ENCODE measurements at regions of chr14 and their contacts with region 1.

Region 1: DNA sequence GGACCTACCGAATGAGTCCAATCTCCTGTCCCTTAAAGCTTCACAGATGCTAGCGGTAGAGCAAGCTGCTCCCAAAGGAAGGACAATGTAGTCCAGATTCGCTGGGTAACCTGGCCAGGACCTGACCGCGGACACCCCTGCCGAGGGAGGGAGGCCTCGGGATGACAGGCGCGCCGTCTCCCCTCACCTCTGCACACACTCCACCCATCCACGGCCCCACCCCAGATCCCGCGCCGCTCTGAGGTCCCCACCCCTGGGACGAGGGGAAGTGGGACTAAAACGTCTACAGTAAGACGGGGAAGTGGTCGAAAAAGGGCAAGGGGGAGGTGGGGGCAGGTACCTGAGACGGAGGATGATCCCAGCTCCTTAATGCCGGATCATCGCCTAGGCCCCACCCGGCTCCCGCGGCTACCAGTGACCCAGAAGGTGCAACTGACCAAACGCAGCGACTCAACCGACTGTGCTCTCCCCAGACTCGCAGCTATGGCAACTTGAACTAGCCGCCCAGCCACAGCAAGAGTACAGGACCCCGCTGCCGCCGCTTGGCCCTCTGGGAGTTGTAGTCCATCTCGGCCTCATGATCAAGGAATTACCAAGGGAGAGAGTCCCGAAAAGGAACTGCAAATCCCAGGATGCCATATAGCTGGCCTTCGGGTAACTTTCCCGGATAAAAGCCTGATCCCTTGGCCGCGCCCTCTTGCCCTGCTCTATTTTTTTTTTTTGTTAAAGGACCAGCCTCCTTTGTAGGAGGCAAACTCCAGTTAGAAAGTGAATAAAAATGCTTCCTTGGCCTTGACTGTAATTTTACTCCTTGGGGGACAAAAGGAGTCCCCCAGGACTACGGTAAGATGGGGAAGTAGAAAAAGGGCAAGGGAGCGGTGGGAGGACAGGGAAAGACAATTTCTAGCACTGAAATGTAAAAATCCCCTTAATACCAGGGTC is at the start of gene CEP128:
- DNase-seq: peak; percentile 81
- H3K4me3 ChIP-seq: peak within 1 kb of the TSS; percentile 89
- CTCF ChIP-seq: no peak

Region 2: DNA sequence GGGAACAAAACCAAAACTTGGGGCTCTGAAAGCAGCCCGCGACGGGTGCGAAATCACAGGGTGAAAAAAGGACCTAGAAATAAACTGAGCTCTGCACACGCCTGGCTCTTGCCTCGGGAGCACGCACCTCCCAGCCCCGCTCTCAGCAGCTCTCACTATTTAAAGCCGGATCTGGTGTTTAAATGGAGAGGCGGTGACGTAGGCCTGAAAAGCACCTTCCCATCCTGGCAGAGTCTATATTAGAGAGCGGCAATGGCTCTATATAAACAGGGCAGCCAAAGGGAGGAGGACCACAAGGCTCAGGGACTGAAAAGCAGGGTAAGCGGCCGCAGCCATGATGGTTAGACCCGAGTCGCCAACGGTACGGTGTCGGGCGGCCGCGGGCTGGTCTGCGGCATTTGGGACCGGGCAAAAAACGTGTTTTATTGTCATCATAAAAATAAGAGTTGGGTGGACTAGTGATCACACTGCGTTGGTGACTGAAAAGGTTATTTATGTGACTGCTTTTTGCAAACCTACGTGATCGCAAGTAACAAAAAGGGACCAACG is 277.8 kb after region 1 on chr14:
- CTCF ChIA-PET with region 1: no interaction called
- POLR2A ChIA-PET with region 1: interaction called, 10 read pairs
- DNase-seq: peak; percentile 86
- H3K4me3 ChIP-seq: peak overlapping the region; percentile 72
- CTCF ChIP-seq: no peak

Measured in AG04449 (cell line).